ENCODE measurements at regions of chr18 and their contacts with region 1.

Region 1: GRCh38 chr18:69948919-69949537 is 1.4 kb upstream of the CD226 start:
- DNase-seq: peak; percentile 88
- ATAC-seq: peak; percentile 83
- H3K4me3 ChIP-seq: peak overlapping the region; percentile 33; the same call in 1 of the 2 replicates
- H3K27ac ChIP-seq: peak overlapping the region; percentile 80
- H3K4me1 ChIP-seq: peaks cover 28% of the 10 kb centered on the region
- H3K27me3 ChIP-seq: no peaks in the 10 kb centered on the region
- CTCF ChIP-seq: no peak
- EP300 ChIP-seq: peak; percentile 97 to 99
- POLR2A ChIP-seq: no peak
- RAD21 ChIP-seq: peak; percentile 1; the same call in 1 of the 2 replicates

Region 2: DNA sequence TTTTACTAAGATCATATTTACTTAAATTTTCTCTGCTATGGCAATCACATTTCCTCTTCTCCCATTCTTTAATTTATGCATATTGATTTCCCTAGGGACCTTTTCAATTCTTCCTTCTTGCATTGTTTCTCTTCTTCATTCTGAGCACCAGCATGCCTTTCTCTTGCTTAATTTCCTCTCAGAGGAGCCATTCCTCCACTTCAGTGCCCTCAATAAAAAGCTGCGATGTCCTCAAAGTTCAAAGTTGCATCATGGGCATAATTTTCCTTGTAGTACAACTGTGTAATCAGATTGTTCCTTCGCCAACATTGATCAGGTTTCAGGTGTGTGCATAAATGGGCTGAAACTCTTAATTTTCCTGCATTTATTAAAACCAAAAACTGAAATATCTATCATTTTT is 20.5 kb after region 1 on chr18:
- CTCF ChIA-PET with region 1: no interaction called
- POLR2A ChIA-PET with region 1: no interaction called
- RAD21 ChIA-PET with region 1: no interaction called
- SMC1A ChIA-PET with region 1: no interaction called
- in situ Hi-C with region 1: no loop called
- intact Hi-C with region 1: no loop called
- DNase-seq: no peak
- ATAC-seq: no peak
- H3K4me3 ChIP-seq: no peak overlapping the region
- H3K27ac ChIP-seq: no peak overlapping the region
- H3K4me1 ChIP-seq: no peaks in the 10 kb centered on the region
- H3K27me3 ChIP-seq: no peaks in the 10 kb centered on the region
- CTCF ChIP-seq: no peak
- EP300 ChIP-seq: no peak
- POLR2A ChIP-seq: no peak
- RAD21 ChIP-seq: no peak

Region 3: DNA sequence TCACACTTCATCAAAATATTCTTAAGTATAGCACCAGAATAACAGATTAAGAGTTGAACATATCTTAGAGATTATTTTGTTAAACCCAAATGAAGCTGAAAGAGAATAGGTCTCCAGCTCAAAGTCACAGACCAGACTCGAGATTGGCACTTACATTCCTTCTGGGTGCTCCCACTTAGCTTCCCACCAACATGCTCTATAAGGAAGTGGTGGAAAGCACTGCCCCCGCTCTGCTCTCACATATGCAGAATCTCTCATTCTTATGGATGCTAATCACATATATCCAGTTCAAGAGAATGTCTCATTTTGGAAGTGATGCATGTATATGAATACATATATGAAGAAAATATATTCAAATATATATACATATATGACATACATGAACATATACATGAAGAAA is 70.1 kb after region 1 on chr18:
- CTCF ChIA-PET with region 1: no interaction called
- POLR2A ChIA-PET with region 1: no interaction called
- RAD21 ChIA-PET with region 1: no interaction called
- SMC1A ChIA-PET with region 1: no interaction called
- in situ Hi-C with region 1: no loop called
- intact Hi-C with region 1: no loop called
- DNase-seq: no peak
- ATAC-seq: no peak
- H3K4me3 ChIP-seq: no peak overlapping the region
- H3K27ac ChIP-seq: no peak overlapping the region
- H3K4me1 ChIP-seq: no peaks in the 10 kb centered on the region
- H3K27me3 ChIP-seq: no peaks in the 10 kb centered on the region
- CTCF ChIP-seq: no peak
- EP300 ChIP-seq: no peak
- POLR2A ChIP-seq: no peak
- RAD21 ChIP-seq: no peak

Region 4: DNA sequence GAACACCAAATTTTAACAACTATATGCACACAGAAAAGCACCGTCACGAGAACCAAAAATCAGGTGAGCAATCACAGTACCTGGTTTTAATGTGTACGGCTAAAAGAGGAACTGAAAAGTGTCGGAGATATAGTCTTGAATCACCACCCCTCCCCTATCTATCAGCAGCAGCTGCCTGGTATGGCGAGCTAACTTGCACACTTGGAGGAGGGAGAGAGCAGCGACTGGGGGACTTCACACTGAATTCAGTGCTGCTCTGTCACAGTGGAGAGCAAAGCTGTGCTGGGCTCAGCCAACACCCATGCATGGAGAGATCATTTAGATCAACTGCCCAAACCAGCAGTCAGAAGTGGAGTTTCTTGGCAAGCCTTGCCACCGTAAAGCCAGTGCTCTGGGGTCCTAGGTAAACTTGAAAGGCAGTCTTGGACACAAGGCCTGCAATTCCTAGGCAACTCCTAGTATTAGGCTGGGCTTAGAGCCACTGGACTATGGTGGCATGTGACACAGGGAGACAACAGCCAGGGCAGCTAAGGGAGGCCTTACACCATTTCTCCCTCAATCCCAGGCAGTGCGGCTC is 87.8 kb after region 1 on chr18:
- CTCF ChIA-PET with region 1: no interaction called
- POLR2A ChIA-PET with region 1: no interaction called
- RAD21 ChIA-PET with region 1: no interaction called
- SMC1A ChIA-PET with region 1: no interaction called
- in situ Hi-C with region 1: no loop called
- intact Hi-C with region 1: loop called (anchors 5 kb)
- DNase-seq: peak; percentile 79
- ATAC-seq: peak; percentile 97
- H3K4me3 ChIP-seq: no peak overlapping the region
- H3K27ac ChIP-seq: peak overlapping the region; percentile 61
- H3K4me1 ChIP-seq: peaks cover 21% of the 10 kb centered on the region
- H3K27me3 ChIP-seq: no peaks in the 10 kb centered on the region
- CTCF ChIP-seq: no peak
- EP300 ChIP-seq: peak; percentile 68 to 85
- POLR2A ChIP-seq: peak; percentile 53; the same call in 1 of the 2 replicates
- RAD21 ChIP-seq: no peak

Region 5: DNA sequence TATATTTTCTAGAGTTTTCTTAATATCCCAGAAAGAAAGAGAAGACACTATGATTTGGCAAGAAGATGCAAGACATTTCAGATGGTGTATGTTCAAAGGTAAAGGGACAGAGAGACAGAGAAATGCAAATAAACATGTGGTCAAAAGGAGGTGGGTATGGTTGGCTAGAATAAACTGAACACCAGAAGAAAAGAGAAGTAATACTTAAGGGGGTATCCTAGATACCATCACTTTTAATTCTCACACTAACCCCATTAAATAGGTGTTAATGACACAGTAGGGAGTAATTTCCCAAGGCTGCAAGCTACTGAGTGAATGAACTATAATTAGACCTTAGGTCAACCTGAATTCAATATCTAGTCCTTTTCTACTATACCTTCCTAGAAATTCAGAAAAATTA is 109.9 kb after region 1 on chr18:
- CTCF ChIA-PET with region 1: no interaction called
- POLR2A ChIA-PET with region 1: no interaction called
- RAD21 ChIA-PET with region 1: no interaction called
- SMC1A ChIA-PET with region 1: interaction called, 3 read pairs
- in situ Hi-C with region 1: no loop called
- intact Hi-C with region 1: loop called (anchors 2 kb)
- DNase-seq: peak; percentile 59
- ATAC-seq: peak; percentile 99
- H3K4me3 ChIP-seq: no peak overlapping the region
- H3K27ac ChIP-seq: peak overlapping the region; percentile 13; the same call in 1 of the 2 replicates
- H3K4me1 ChIP-seq: no peaks in the 10 kb centered on the region
- H3K27me3 ChIP-seq: no peaks in the 10 kb centered on the region
- CTCF ChIP-seq: no peak
- EP300 ChIP-seq: peak; percentile 30 to 70; a peak in 2 of 4 replicates
- POLR2A ChIP-seq: no peak
- RAD21 ChIP-seq: no peak

Measured in GM12878 (cell line).